ENCODE measurements at regions of chrX and their contacts with region 1.

Region 1: DNA sequence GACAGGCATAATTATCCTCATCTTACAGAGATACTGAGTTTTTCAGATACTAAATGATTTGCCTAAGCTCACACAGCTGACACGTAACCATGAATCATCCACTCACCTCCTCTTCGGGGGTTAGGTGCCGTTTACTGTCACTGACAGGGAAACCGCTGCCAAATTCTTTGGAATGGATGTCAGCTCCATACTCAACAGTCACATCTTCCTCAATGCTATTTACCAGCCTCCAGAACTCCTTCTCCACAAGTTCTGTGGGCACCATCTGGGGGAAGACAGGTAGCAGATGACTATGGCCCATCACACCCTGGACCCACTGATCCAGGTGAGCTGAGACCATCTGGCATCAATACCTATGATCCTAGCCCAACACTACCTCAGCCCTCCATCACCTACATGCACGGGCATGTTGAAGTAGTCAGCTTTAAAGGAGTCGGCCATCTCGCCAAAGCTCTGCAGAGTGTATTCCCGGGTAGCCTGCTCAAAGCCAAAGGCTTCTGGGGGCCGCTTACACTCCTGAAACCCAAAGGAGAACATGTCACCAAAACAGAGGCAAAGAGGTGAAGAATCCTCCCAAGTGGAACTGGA is 13.5 kb downstream of the KDM5C start:
- DNase-seq: no peak
- H3K4me3 ChIP-seq: no peak overlapping the region
- H3K27ac ChIP-seq: no peak overlapping the region
- H3K4me1 ChIP-seq: no peaks in the 10 kb centered on the region
- H3K27me3 ChIP-seq: no peaks in the 10 kb centered on the region
- CTCF ChIP-seq: no peak
- POLR2A ChIP-seq: no peak

Region 2: GRCh38 chrX:53095796-53096195 is 115.7 kb before region 1 on chrX:
- intact Hi-C with region 1: loop called in 1 of 2 experiments (anchors 10 kb)
- DNase-seq: no peak
- H3K4me3 ChIP-seq: no peak overlapping the region
- H3K27ac ChIP-seq: no peak overlapping the region
- H3K4me1 ChIP-seq: peaks cover 0 to 8% of the 10 kb centered on the region in 2 donors
- H3K27me3 ChIP-seq: no peaks in the 10 kb centered on the region
- CTCF ChIP-seq: no peak
- POLR2A ChIP-seq: no peak

Region 3: GRCh38 chrX:53135581-53135980 is 75.9 kb before region 1 on chrX:
- intact Hi-C with region 1: no loop called
- DNase-seq: no peak
- H3K4me3 ChIP-seq: no peak overlapping the region
- H3K27ac ChIP-seq: no peak overlapping the region
- H3K4me1 ChIP-seq: no peaks in the 10 kb centered on the region
- H3K27me3 ChIP-seq: peaks cover 7% of the 10 kb centered on the region
- CTCF ChIP-seq: no peak
- POLR2A ChIP-seq: no peak